PC-9 (cell line): ENCODE measurements at regions of chr6 and their contacts with region 1.

Region 1: GRCh38 chr6:75952128-75952527 is 120.3 kb downstream of the IMPG1 start:
- DNase-seq: no peak
- H3K4me3 ChIP-seq: no peak overlapping the region
- H3K27ac ChIP-seq: no peak overlapping the region
- H3K4me1 ChIP-seq: 0 out of 2 replicates have a peak, but pooled peaks cover 3% of the 10 kb centered on the region
- H3K27me3 ChIP-seq: no peaks in the 10 kb centered on the region; the same call in 1 of the 2 replicates
- CTCF ChIP-seq: no peak

Region 2: DNA sequence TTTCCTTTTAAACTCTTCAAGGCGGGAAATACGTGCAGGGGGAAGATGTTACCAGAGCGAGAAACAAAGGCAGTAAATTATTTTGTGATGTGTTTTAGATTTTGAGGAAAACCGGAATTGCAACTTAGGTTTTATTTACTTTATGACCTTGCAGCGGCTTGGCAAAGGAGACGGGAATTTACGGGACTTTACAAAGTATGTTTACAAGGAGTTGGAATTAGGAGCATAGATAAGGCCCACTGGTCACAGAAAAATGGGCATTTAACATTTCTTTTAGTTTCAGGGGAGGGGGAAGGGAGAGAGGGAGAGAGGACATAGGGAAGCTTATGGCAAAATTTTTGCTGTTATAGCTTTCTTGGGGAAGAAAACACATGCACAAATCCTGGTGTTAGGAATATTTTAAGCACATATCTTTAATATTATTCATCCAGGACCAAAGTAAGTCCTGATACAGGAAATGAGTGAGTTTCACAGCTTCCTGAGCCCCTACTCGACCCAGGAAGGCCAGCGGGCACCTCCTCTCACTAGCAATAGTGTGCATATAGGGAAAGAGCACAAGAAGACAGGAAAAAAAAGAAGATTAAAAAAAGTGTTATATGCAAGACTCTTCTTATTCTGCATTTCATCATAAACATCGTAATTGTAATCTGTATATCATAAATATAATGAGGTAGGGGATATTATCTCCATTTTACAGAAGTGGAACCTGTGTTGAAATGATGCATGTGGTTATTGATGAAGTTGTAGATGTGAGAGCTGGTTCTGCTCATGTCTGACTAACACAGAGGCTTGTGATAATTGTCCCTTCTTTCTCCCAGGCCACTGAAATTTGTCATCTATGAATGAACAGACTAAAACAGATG is 102.2 kb before region 1 on chr6:
- CTCF ChIA-PET with region 1: no interaction called
- POLR2A ChIA-PET with region 1: no interaction called
- intact Hi-C with region 1: no loop called
- DNase-seq: peak; percentile 38 to 77
- H3K4me3 ChIP-seq: peak overlapping the region; percentile 41; the same call in 1 of the 2 replicates
- H3K27ac ChIP-seq: peak overlapping the region; percentile 81
- H3K4me1 ChIP-seq: peaks cover 52% of the 10 kb centered on the region
- H3K27me3 ChIP-seq: no peaks in the 10 kb centered on the region
- CTCF ChIP-seq: no peak

Region 3: DNA sequence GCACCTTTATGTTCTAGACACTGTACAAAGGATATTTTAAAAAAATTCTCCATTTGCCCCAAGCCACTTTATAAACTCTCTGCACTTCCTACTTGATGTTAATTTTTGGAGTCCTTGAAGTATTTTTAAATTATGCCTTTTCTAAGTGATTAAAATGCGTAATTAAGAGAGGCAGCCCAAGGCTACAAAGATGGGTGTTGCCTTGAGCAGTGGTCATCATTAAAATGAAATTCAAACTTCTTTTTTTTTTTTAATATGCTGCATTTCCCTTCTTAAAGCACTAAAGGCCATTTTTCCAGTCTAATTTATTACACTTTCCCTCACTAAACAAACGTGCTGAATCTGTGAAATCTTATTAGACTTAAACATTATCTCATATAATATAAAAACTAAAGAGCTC is 18.0 kb after region 1 on chr6:
- CTCF ChIA-PET with region 1: no interaction called
- POLR2A ChIA-PET with region 1: no interaction called
- intact Hi-C with region 1: no loop called
- DNase-seq: no peak
- H3K4me3 ChIP-seq: no peak overlapping the region
- H3K27ac ChIP-seq: no peak overlapping the region
- H3K4me1 ChIP-seq: no peaks in the 10 kb centered on the region
- H3K27me3 ChIP-seq: no peaks in the 10 kb centered on the region
- CTCF ChIP-seq: no peak

Region 4: DNA sequence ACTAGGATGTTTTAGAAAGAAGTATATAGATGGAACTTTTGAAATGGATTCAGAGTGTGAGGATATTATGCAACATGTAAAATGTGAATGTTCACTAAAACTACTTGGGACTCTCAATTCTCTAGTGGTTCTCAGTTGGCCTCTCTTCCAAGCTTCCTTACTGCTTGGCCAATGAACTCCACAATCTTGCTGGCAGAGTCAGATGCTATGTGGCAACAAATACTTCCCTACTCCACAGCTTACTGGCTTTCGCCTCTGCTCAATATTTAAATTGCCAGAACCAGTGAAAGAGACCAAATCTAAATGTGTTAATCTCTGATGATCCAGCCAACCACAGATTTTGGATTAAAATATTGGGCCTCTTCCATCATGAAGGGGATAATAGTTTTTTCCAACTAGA is 1372.7 kb after region 1 on chr6:
- CTCF ChIA-PET with region 1: no interaction called
- POLR2A ChIA-PET with region 1: no interaction called
- intact Hi-C with region 1: loop called (anchors 5 kb)
- DNase-seq: no peak
- H3K4me3 ChIP-seq: no peak overlapping the region
- H3K27ac ChIP-seq: no peak overlapping the region
- H3K4me1 ChIP-seq: no peaks in the 10 kb centered on the region
- H3K27me3 ChIP-seq: no peaks in the 10 kb centered on the region
- CTCF ChIP-seq: no peak